Activated naive CD4-positive, alpha-beta T cell treated with anti-CD3 and anti-CD28 coated beads for 36 hours (primary cell): ENCODE measurements at regions of chr1 and their contacts with region 1.

Region 1: GRCh38 chr1:94926915-94927404 is at the start of gene CNN3:
- DNase-seq: peak; percentile 77
- H3K4me3 Mint-ChIP-seq: peak within 1 kb of the TSS; percentile 85
- H3K27ac Mint-ChIP-seq: no peak within 1 kb of the TSS
- H3K4me1 Mint-ChIP-seq: peaks cover 21% of the 10 kb centered on the region
- H3K27me3 Mint-ChIP-seq: peaks cover 15% of the 10 kb centered on the region
- total RNA-seq, gene CNN3: 10.0 to 10.6 TPM

Region 2: GRCh38 chr1:94541175-94542087 is 385.5 kb before region 1 on chr1 and contains the start of gene F3:
- CTCF ChIA-PET with region 1: no interaction called
- intact Hi-C with region 1: loop called (anchors 2 kb)
- DNase-seq: peak; percentile 89
- H3K4me3 Mint-ChIP-seq: peak within 1 kb of the TSS; percentile 72
- H3K27ac Mint-ChIP-seq: no peak within 1 kb of the TSS
- H3K4me1 Mint-ChIP-seq: peaks cover 14% of the 10 kb centered on the region
- H3K27me3 Mint-ChIP-seq: peaks cover 63% of the 10 kb centered on the region
- total RNA-seq, gene F3: 0.10 TPM in 1 of 2 experiments, not detected in the other

Region 3: DNA sequence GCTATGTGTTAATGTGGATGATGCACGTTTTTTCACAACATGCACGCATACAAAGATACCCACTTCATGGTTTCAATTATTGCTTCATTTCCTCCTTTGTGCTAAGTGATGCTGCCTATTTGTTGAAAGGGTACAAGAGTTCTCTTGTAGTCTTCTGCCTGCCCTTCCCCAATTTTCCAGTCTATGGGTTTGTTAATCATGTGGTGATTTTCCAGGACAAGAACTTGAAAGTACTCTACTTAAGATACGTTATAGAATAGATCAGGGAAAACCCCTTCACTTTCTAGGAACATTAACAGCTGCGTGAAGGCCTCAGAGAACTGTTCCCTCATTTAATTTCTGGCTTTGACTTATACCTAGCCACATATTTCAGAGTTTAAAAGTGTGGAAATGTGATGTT is 158.9 kb before region 1 on chr1:
- CTCF ChIA-PET with region 1: no interaction called
- intact Hi-C with region 1: no loop called
- DNase-seq: no peak
- H3K4me3 Mint-ChIP-seq: no peak overlapping the region
- H3K27ac Mint-ChIP-seq: no peak overlapping the region
- H3K4me1 Mint-ChIP-seq: no peaks in the 10 kb centered on the region
- H3K27me3 Mint-ChIP-seq: no peaks in the 10 kb centered on the region

Region 4: GRCh38 chr1:94854458-94855306 is 72.3 kb before region 1 on chr1:
- CTCF ChIA-PET with region 1: no interaction called
- intact Hi-C with region 1: loop called (anchors 2 kb)
- DNase-seq: peak; percentile 91
- H3K4me3 Mint-ChIP-seq: no peak overlapping the region
- H3K27ac Mint-ChIP-seq: no peak overlapping the region
- H3K4me1 Mint-ChIP-seq: no peaks in the 10 kb centered on the region
- H3K27me3 Mint-ChIP-seq: peaks cover 3% of the 10 kb centered on the region

Region 5: GRCh38 chr1:94883691-94884090 is 43.3 kb before region 1 on chr1:
- CTCF ChIA-PET with region 1: no interaction called
- intact Hi-C with region 1: loop called (anchors 2 kb)
- DNase-seq: peak; percentile 35
- H3K4me3 Mint-ChIP-seq: peak overlapping the region; percentile 44
- H3K27ac Mint-ChIP-seq: peak overlapping the region; percentile 65
- H3K4me1 Mint-ChIP-seq: peaks cover 12% of the 10 kb centered on the region
- H3K27me3 Mint-ChIP-seq: no peaks in the 10 kb centered on the region

Region 6: GRCh38 chr1:94962409-94963265 is 35.7 kb after region 1 on chr1:
- CTCF ChIA-PET with region 1: no interaction called
- intact Hi-C with region 1: loop called (anchors 2 kb)
- DNase-seq: peak; percentile 48
- H3K4me3 Mint-ChIP-seq: peak overlapping the region; percentile 84
- H3K27ac Mint-ChIP-seq: peak overlapping the region; percentile 84
- H3K4me1 Mint-ChIP-seq: peaks cover 8% of the 10 kb centered on the region
- H3K27me3 Mint-ChIP-seq: no peaks in the 10 kb centered on the region